Dorsolateral prefrontal cortex (tissue), 120 donors: ENCODE measurements at regions of chr16 and their contacts with region 1.

Region 1: DNA sequence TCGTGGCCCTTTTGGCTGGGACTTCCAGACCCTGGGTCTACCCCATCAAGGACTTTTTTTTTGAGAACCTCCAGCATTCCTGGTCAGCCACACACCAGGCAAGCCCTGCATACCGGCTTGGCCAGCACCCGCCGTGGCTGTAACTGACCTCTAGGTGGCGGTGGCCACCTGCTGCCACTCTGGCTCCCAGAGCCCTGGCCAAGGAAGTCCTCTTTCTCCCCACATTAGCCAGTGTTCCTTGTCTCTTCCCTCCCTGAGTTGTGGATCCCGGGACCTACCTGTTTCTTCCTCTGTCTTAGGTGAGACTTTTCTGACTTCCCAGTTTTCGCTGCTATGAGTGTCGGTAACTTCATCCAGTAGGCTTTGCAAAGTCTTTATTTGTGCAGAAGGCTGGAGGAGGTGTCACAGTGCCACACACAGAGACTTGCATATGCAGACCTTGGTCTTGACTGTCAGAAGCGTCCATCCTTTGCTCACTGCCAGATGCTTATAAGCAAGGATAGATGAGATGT is 348.3 kb downstream of the CPPED1 start:
- DNase-seq: peak; percentile 14 to 82 (median 67)
- H3K4me3 ChIP-seq: no peak overlapping the region
- H3K27ac ChIP-seq: peak overlapping the region in 1 of 59 donors; percentile 21
- H3K27me3 ChIP-seq: no peaks in the 10 kb centered on the region
- CTCF ChIP-seq: peak; percentile 50 to 95 (median 84)

Region 2: DNA sequence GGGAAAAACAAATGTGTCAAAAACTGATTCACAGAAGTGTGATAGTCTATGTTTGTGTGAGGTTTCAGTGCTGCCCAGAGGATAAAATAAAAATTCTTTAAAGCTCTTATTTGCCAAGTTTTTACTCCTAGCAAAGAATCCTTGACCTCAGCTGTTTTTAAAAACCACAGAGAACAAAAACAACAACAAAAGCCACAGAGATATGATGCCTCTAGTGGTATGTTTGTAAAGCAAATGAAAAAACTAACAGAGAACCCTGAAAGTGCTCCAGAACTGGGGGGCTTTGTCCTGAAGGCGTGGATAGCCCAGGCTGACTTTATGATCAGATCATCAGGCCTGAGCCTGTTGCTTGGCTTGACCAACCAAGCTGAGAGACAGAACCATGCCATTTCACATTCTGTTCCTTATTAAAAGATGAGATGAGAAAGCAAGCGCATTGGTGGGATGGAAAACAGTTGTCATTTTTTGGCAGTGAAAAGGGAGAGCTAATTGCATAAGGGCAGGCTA is 62.7 kb before region 1 on chr16:
- intact Hi-C with region 1: no loop called
- DNase-seq: no peak
- H3K4me3 ChIP-seq: no peak overlapping the region
- H3K27ac ChIP-seq: peak overlapping the region in 47 of 59 donors; percentile 1 to 86 (median 59)
- H3K27me3 ChIP-seq: no peaks in the 10 kb centered on the region
- CTCF ChIP-seq: peak in 26 of 56 donors; percentile 6 to 49 (median 30)

Region 3: DNA sequence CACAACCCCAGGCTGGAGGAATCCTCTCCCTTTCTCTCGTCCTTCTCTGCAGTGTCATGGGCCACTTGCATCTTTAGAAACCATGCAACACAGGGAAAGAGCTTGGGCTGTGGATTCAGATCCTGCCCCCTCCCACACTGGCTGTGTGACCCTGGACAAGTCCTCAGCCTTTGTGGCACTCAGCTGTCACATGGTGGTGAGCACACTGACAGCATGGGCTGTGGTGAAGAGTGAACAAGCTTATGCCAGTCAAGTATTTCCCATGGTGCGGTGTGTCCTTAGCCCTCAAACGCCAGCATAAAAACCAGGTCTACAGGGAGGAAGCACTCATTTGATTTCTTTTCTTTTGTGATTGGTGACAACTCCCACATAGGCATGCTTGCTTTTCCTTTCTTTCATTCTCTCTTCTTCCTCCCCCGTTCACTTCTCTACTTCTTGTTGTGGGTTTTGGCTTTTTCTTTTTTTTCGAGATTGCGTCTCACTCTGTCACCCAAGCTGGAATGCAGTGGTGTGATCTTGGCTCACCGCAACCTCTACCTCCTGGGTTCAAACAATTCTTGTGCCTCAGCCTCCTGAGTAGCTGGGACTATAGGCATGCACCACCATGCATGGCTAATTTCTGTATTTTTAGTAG is 34.1 kb after region 1 on chr16:
- intact Hi-C with region 1: no loop called
- DNase-seq: no peak
- H3K4me3 ChIP-seq: no peak overlapping the region
- H3K27ac ChIP-seq: no peak overlapping the region
- H3K27me3 ChIP-seq: no peaks in the 10 kb centered on the region
- CTCF ChIP-seq: no peak

Region 4: GRCh38 chr16:12558641-12559040 is 103.3 kb after region 1 on chr16:
- intact Hi-C with region 1: no loop called
- DNase-seq: peak in 1 of 10 donors; percentile 32
- H3K4me3 ChIP-seq: no peak overlapping the region
- H3K27ac ChIP-seq: peak overlapping the region in 32 of 59 donors; percentile 1 to 89 (median 66)
- H3K27me3 ChIP-seq: no peaks in the 10 kb centered on the region
- CTCF ChIP-seq: peak in 16 of 56 donors; percentile 13 to 38 (median 25)

Region 5: DNA sequence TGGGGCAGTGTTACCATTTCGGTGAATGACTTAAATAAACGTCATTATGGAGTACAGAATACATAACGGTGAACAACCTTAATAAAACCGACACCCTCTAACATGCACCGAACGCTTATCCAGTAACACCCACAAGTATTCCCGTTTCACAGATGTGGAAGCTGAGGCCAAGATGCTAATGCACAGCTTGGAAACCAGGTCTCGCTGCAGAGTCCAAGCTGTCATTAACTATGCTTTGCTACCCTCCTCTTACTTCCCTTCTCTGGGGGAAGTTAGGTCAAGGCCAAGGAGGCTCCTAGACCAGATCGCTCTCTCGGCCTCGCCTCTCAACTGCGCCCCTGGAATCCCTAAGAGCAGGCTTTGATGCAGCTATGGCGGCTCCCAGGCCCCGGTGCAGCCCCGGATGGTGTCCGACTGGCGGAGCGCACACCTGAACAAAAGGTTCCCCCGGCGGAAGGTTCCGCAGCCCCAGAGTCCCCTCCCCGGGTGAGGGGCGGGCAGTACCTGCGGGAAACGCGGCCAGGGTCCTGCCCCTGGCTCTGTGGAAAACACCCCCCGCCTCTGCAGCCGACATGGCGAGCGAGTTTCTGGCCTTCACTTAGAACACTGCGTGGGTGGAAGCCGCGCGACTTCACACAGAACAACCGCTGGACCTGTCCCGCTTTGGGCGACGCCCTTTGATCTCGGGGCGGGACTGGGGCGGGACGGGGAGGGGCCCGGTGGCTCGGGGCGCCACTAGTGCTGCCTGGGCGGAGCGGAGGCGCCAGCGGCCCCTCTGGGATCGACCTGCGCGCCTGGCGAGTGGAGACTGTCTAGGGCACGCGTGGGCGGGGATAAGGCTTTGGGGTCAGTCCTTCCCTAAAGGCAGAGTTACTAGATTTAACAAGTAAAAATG is 348.1 kb after region 1 on chr16 and contains the start of gene CPPED1:
- intact Hi-C with region 1: loop called in 1 of 2 experiments (anchors 10 kb)
- DNase-seq: peak; percentile 74 to 94 (median 90)
- H3K4me3 ChIP-seq: peak within 1 kb of the TSS; percentile 48 to 89 (median 74)
- H3K27ac ChIP-seq: peak within 1 kb of the TSS; percentile 11 to 96 (median 88)
- H3K27me3 ChIP-seq: no peaks in the 10 kb centered on the region
- CTCF ChIP-seq: peak in 27 of 56 donors; percentile 3 to 57 (median 30)
- total RNA-seq, gene CPPED1: 8.3 to 42.3 (median 17.7) TPM

Region 6: GRCh38 chr16:12819126-12820117 is 364.1 kb after region 1 on chr16:
- intact Hi-C with region 1: loop called in 1 of 2 experiments (anchors 5 kb)
- DNase-seq: peak in 5 of 10 donors; percentile 27 to 65 (median 52)
- H3K4me3 ChIP-seq: no peak overlapping the region
- H3K27ac ChIP-seq: no peak overlapping the region
- H3K27me3 ChIP-seq: no peaks in the 10 kb centered on the region
- CTCF ChIP-seq: peak; percentile 20 to 85 (median 71)

Region 7: GRCh38 chr16:13453938-13454553 is 998.7 kb after region 1 on chr16:
- intact Hi-C with region 1: loop called in 1 of 2 experiments (anchors 10 kb)
- DNase-seq: peak in 3 of 10 donors; percentile 29 to 66 (median 48)
- H3K4me3 ChIP-seq: no peak overlapping the region
- H3K27ac ChIP-seq: no peak overlapping the region
- H3K27me3 ChIP-seq: peaks cover 0 to 5% (median 0%) of the 10 kb centered on the region in 45 donors
- CTCF ChIP-seq: peak; percentile 47 to 86 (median 66)